Vagina (tissue), 2 donors: ENCODE measurements at regions of chrX and their contacts with region 1.

Region 1: GRCh38 chrX:40719218-40719617 is 16.1 kb downstream of the MED14 start:
- DNase-seq: no peak
- H3K4me3 ChIP-seq: no peak overlapping the region
- H3K27ac ChIP-seq: no peak overlapping the region
- H3K4me1 ChIP-seq: no peaks in the 10 kb centered on the region
- H3K27me3 ChIP-seq: no peaks in the 10 kb centered on the region
- CTCF ChIP-seq: no peak
- POLR2A ChIP-seq: no peak

Region 2: DNA sequence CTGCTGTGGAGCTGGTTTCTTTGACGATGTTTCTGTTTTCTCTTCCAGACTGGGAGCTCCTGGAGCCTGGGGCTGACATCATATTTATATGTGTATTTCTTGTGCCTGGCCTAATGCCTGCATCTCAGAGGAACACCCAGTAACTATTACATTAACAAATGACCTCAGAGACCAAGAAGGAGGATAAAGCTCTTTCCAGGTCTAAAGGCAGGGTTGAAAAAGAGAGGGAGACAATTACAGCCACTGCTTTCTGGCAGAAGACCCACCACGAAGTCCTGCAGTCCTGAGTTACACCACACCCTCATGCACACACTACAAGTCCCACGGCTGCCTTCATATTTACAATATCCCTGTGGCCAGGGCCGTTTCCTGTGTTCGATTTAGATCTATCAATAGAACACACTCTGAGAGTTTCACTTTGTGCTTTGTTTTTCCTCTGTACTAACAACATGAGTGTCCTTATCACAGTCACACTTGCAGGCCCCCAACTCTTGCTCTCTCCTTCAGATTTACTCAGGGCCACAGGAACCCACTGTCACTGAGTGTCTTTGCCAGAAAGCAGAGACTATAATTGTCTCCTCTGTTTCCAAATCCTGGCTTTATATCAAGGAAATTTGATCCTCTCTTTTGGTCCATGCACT is 1382.4 kb before region 1 on chrX:
- intact Hi-C with region 1: loop called (anchors 5 kb)
- DNase-seq: no peak
- H3K4me3 ChIP-seq: no peak overlapping the region
- H3K27ac ChIP-seq: no peak overlapping the region
- H3K4me1 ChIP-seq: peaks cover 20% of the 10 kb centered on the region
- H3K27me3 ChIP-seq: no peaks in the 10 kb centered on the region
- CTCF ChIP-seq: no peak
- POLR2A ChIP-seq: no peak